H1 (cell line): ENCODE measurements at regions of chr17 and their contacts with region 1.

Region 1: DNA sequence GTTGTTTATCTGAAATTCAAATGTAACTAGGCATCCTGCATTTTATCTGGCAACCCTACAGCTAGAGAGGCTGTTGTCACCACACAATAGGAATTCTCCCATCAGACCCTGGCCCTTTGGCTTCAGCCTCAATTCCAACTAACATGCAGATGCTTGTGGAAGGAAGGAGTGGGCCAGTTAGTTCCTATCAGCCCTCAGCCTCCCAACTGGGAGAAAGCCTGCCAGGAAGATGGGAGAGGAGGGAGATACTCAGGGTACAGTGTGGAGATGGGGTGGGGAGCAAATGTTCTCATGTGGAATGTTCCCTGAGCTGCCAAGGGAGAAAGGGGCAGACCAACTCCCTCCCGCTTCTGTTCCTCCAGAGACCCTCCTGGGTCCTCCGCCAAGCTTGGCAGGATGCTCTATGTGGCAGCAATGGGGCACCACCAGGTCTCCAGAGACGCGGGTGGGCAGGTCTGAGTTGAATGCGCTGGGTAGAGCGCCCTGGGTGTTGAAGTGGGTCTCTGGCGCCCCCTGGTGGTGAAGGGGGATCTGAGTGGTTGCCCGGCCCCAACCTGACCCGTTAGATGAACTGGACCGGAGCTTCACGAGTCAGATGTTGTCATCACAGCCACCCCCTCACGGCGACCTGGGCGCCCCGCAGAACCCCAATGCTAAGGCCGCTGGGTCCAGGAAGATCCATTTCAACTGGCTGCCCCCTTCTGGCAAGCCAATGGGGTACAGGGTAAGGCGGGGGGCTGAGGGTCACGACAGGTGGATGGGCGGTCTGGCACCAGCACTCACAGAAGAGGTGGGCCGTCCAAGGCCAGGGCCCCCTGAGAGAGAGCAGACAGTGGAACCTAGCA is 15.2 kb downstream of the GALK1 start:
- DNase-seq: peak; percentile 54 to 98
- H3K4me3 ChIP-seq: no peak overlapping the region
- H3K27ac ChIP-seq: no peak overlapping the region
- H3K4me1 ChIP-seq: peaks cover 0 to 5% (median 2%) of the 10 kb centered on the region in 4 experiments; a peak in 4 of 7 replicates
- H3K27me3 ChIP-seq: peaks cover 0 to 2% (median 0%) of the 10 kb centered on the region in 4 experiments; a peak in 1 of 7 replicates
- CTCF ChIP-seq: peak; percentile 81 to 92 (median 87)
- EP300 ChIP-seq: no peak
- POLR2A ChIP-seq: no peak
- RAD21 ChIP-seq: peak; percentile 76 to 81

Region 2: GRCh38 chr17:75601057-75602051 is 148.4 kb before region 1 on chr17:
- CTCF ChIA-PET with region 1: interaction called, 65 read pairs
- POLR2A ChIA-PET with region 1: no interaction called
- DNase-seq: peak; percentile 47 to 97
- H3K4me3 ChIP-seq: no peak overlapping the region
- H3K27ac ChIP-seq: no peak overlapping the region
- H3K4me1 ChIP-seq: no peaks in the 10 kb centered on the region; a peak in 1 of 7 replicates
- H3K27me3 ChIP-seq: no peaks in the 10 kb centered on the region
- CTCF ChIP-seq: peak; percentile 88 to 98 (median 95)
- EP300 ChIP-seq: no peak
- POLR2A ChIP-seq: no peak
- RAD21 ChIP-seq: peak; percentile 55 to 71

Region 3: GRCh38 chr17:75625813-75626486 is 123.8 kb before region 1 on chr17:
- CTCF ChIA-PET with region 1: interaction called, 312 read pairs
- POLR2A ChIA-PET with region 1: interaction called, 4 read pairs
- DNase-seq: peak in 1 of 2 experiments; percentile 88
- H3K4me3 ChIP-seq: no peak overlapping the region
- H3K27ac ChIP-seq: no peak overlapping the region
- H3K4me1 ChIP-seq: no peaks in the 10 kb centered on the region
- H3K27me3 ChIP-seq: no peaks in the 10 kb centered on the region; a peak in 2 of 7 replicates
- CTCF ChIP-seq: peak; percentile 91 to 94 (median 93)
- EP300 ChIP-seq: no peak
- POLR2A ChIP-seq: 0 out of 3 replicates have a peak, but pooled peaks of 1 of the 2 experiments have one; percentile 33
- RAD21 ChIP-seq: peak; percentile 22 to 50; a peak in 3 of 4 replicates

Region 4: GRCh38 chr17:75673487-75673886 is 76.3 kb before region 1 on chr17:
- CTCF ChIA-PET with region 1: interaction called, 115 read pairs
- POLR2A ChIA-PET with region 1: interaction called, 4 read pairs
- DNase-seq: no peak
- H3K4me3 ChIP-seq: no peak overlapping the region
- H3K27ac ChIP-seq: no peak overlapping the region
- H3K4me1 ChIP-seq: no peaks in the 10 kb centered on the region
- H3K27me3 ChIP-seq: no peaks in the 10 kb centered on the region
- CTCF ChIP-seq: no peak
- EP300 ChIP-seq: no peak
- POLR2A ChIP-seq: peak in 1 of 2 experiments; percentile 31; a peak in 1 of 3 replicates
- RAD21 ChIP-seq: no peak

Region 5: DNA sequence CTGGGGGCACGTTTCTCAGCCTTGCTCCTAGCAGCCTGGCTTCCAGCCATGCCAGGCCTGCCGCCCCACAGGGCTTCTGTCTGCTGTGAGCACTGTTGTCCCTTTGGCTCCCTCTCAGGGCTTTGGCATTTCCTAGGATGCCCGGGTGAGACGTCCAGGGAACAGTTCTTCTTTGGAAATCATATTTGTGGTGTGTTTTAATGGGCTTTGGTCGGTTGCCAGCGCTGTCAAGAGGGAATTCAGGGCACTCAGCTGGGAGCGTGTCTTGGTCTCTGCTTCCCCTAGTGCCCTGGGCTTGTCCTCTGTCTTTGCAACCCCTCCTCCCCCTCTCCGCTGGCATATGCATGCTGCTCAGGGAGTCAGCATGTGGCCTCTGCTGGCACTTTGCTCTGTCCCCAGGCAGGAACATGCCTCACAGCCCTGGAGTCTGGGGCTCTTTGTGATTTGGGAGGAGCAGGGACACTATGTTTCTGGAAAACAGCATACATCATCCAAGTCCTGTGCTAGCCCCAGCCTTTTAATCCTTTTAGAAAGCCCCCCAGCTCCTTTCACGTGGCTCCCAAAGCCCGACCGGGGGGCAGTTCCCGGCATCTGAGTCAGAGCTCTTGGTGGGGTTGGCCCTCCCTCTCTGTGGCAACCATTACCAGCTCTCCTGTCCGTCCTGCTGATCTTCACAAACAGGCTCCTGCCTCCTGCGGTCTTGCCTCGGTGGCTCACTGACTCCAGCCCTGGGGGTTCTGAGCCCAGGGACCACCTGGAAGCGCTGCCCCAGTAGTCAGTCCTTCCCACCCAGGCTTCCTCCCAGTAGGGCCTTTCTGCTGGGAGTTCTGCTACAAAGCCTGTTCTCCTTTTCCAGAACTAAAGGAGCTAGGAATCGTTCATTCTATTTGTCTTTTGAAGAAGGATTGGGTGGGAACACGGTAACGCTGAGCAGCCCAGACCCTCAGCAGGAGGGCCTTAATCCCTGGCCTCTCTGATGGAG is 56.0 kb before region 1 on chr17:
- CTCF ChIA-PET with region 1: interaction called, 48 read pairs
- POLR2A ChIA-PET with region 1: interaction called, 3 read pairs
- DNase-seq: no peak
- H3K4me3 ChIP-seq: peak overlapping the region in 1 of 4 experiments; percentile 19; a peak in 4 of 8 replicates
- H3K27ac ChIP-seq: peak overlapping the region; percentile 64; the same call in 1 of the 2 replicates
- H3K4me1 ChIP-seq: peaks cover 3 to 21% (median 7%) of the 10 kb centered on the region in 4 experiments
- H3K27me3 ChIP-seq: no peaks in the 10 kb centered on the region
- CTCF ChIP-seq: peak in 2 of 3 experiments; percentile 9 to 26; a peak in 2 of 4 replicates
- EP300 ChIP-seq: no peak
- POLR2A ChIP-seq: no peak
- RAD21 ChIP-seq: peak in 1 of 2 experiments; percentile 20; a peak in 1 of 4 replicates

Region 6: GRCh38 chr17:75731716-75732498 is 17.9 kb before region 1 on chr17:
- CTCF ChIA-PET with region 1: interaction called, 98 read pairs
- POLR2A ChIA-PET with region 1: interaction called, 3 read pairs
- DNase-seq: no peak
- H3K4me3 ChIP-seq: no peak overlapping the region
- H3K27ac ChIP-seq: no peak overlapping the region
- H3K4me1 ChIP-seq: no peaks in the 10 kb centered on the region; a peak in 2 of 7 replicates
- H3K27me3 ChIP-seq: no peaks in the 10 kb centered on the region
- CTCF ChIP-seq: no peak
- EP300 ChIP-seq: no peak
- POLR2A ChIP-seq: no peak
- RAD21 ChIP-seq: no peak

Region 7: DNA sequence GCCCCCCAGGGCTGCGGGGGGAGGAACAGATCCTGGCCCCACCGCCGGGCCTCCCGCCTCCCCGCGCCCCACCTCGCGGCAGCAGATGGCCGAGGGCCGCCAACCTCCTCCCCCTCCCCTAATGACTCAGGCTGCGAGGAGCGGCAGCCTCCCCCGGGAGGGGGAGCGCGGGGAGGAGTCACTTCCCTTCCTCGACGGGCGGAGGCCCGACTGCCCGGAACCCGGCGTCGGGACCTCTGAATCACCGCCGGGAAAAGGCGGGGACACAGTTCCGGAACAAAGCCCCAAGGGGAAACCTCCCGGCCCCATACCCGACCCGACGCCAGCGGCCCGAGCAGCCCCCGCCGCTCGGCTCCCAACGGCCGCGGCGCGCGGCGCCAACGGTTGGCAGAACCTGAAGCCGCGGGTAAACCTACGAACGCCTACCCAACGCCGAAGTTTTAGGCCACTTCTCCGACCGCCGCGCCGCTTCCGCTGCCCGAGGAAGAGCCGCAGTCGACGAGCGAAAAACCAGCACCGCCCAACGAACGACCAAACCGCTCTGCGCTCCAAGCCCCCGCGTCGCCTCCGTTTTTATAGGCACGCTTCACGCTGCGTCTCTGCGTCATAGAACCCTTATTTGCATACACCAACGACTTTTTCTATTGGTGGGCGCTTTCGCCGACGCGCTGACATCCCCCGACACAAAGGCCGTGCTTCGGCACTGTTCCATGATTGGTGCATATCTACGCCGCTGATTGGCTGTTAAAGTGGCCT is 29.6 kb after region 1 on chr17:
- CTCF ChIA-PET with region 1: interaction called, 359 read pairs
- POLR2A ChIA-PET with region 1: interaction called, 425 read pairs
- DNase-seq: peak; percentile 94 to 98
- H3K4me3 ChIP-seq: peak overlapping the region; percentile 75 to 93 (median 86)
- H3K27ac ChIP-seq: peak overlapping the region; percentile 92
- H3K4me1 ChIP-seq: peaks cover 0 to 10% (median 7%) of the 10 kb centered on the region in 4 experiments; a peak in 6 of 7 replicates
- H3K27me3 ChIP-seq: no peaks in the 10 kb centered on the region
- CTCF ChIP-seq: no peak
- EP300 ChIP-seq: no peak
- POLR2A ChIP-seq: peak; percentile 100
- RAD21 ChIP-seq: no peak